CD4-positive, alpha-beta T cell (primary cell): ENCODE measurements at regions of chr6 and their contacts with region 1.

Region 1: GRCh38 chr6:33430991-33431879 is 11.4 kb downstream of the SYNGAP1 start:
- DNase-seq: peak; percentile 74 to 92 (median 85)
- ATAC-seq: peak; percentile 66
- H3K4me3 ChIP-seq: peak overlapping the region; percentile 71
- H3K4me3 Mint-ChIP-seq: peak overlapping the region; percentile 93
- H3K27ac ChIP-seq: peak overlapping the region; percentile 52 to 64
- H3K27ac Mint-ChIP-seq: peak overlapping the region; percentile 92
- H3K4me1 ChIP-seq: peaks cover 63% of the 10 kb centered on the region
- H3K4me1 Mint-ChIP-seq: peaks cover 65% of the 10 kb centered on the region
- H3K27me3 ChIP-seq: no peaks in the 10 kb centered on the region
- H3K27me3 Mint-ChIP-seq: no peaks in the 10 kb centered on the region
- CTCF ChIP-seq: no peak

Region 2: GRCh38 chr6:33417903-33418689 is 13.1 kb before region 1 on chr6 and contains the start of gene CUTA:
- CTCF ChIA-PET with region 1: interaction called, 9 read pairs
- POLR2A ChIA-PET with region 1: interaction called, 60 read pairs
- intact Hi-C with region 1: loop called (anchors 1 to 2 kb)
- DNase-seq: peak; percentile 97 to 100 (median 98)
- ATAC-seq: peak; percentile 85
- H3K4me3 ChIP-seq: peak within 1 kb of the TSS; percentile 82
- H3K4me3 Mint-ChIP-seq: peak within 1 kb of the TSS; percentile 92
- H3K27ac ChIP-seq: peak within 1 kb of the TSS; percentile 97 to 99
- H3K27ac Mint-ChIP-seq: peak within 1 kb of the TSS; percentile 98
- H3K4me1 ChIP-seq: peaks cover 77% of the 10 kb centered on the region
- H3K4me1 Mint-ChIP-seq: peaks cover 79% of the 10 kb centered on the region
- H3K27me3 ChIP-seq: no peaks in the 10 kb centered on the region
- H3K27me3 Mint-ChIP-seq: no peaks in the 10 kb centered on the region
- CTCF ChIP-seq: peak; percentile 30
- total RNA-seq, gene CUTA: 176 to 185 TPM

Region 3: DNA sequence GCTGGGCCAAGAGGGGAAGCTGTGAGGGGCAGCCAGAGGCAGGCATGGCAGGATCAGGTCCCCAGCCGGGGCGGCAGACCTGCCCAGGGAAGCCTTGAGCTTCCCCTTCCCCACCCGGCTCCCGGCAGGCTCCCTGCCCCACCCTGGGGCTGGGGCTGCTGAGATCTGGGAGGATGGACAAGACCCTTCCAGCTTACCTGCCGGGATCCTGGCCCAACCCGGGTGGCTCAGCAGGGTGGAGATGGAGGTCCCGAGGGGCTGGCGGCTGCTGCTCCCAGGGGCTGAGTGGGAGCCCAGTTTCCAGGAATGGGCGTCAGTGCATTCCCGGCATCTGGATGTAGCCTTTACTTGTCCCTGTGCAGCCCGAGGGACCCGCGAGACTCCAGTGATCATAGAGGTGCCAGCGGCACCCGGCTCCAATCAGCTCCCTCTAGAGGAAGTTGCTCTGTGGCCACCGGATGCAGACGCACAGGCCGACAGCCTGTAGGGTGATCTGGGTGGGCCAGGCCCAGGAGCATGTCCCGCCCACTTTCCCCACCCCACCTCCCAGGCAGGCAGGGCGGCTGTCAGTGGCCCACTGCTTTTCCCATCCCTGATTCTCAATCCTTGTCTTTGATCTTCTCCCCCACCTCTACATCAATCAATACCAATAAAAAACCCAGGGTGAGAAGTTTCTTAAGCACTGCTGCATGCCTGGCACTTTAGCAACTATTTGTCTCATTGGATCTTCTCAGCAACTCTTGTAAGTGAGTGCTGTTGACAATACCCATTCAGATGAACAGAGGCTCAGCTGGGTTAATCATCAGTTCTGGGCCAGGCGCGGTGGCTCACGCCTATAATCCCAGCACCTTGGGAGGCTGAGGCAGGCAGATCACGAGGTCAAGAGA is 148.8 kb after region 1 on chr6 and contains the start of gene BAK1:
- CTCF ChIA-PET with region 1: interaction called, 6 read pairs
- POLR2A ChIA-PET with region 1: interaction called, 9 read pairs
- intact Hi-C with region 1: loop called in 1 of 2 experiments (anchors 5 kb)
- DNase-seq: peak; percentile 64 to 92 (median 78)
- ATAC-seq: peak; percentile 93
- H3K4me3 ChIP-seq: peak within 1 kb of the TSS; percentile 99
- H3K4me3 Mint-ChIP-seq: peak within 1 kb of the TSS; percentile 96
- H3K27ac ChIP-seq: peak within 1 kb of the TSS; percentile 82 to 88
- H3K27ac Mint-ChIP-seq: peak within 1 kb of the TSS; percentile 97
- H3K4me1 ChIP-seq: peaks cover 51% of the 10 kb centered on the region
- H3K4me1 Mint-ChIP-seq: peaks cover 44% of the 10 kb centered on the region
- H3K27me3 ChIP-seq: no peaks in the 10 kb centered on the region
- H3K27me3 Mint-ChIP-seq: no peaks in the 10 kb centered on the region
- CTCF ChIP-seq: peak; percentile 63
- total RNA-seq, gene BAK1: 38.3 to 40.8 TPM

Region 4: DNA sequence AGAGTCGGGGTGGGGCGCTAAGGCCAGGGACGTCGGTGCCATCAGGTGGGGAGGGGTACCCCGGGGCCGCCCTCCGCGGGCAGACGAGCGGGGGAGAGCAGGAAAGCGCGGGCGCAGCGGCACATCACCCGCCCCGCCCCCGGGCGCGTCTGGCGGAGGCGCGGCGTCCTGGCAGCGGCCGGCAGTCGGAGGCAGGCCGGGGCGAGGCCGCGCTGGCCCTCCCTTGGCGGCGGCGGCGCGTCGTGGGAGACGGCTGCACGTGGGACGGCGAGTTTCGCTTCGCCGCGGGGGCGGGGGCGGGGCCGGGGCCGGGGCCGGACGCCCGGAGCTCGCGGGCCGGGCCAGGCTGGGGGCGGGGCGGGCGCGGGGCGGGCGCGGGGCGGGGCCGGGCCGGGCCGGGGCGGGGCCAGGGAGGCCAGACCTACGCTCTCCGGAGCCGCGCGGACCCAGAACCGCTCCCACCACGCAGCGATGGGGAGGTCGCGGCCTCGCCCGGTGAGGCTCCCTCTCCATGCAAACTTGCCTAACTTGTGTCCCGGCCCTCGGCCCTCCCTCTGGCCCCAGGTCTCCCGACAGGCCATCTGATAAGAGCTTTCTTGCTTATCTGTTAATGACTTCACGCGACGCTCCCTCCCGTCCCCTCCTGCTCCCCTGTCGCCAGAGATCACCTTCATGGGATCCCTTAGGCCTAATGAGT is 202.4 kb after region 1 on chr6:
- CTCF ChIA-PET with region 1: no interaction called
- POLR2A ChIA-PET with region 1: no interaction called
- intact Hi-C with region 1: no loop called
- DNase-seq: peak in 13 of 14 experiments; percentile 17 to 85 (median 49)
- ATAC-seq: peak; percentile 63
- H3K4me3 ChIP-seq: peak overlapping the region; percentile 55
- H3K4me3 Mint-ChIP-seq: peak overlapping the region; percentile 93
- H3K27ac ChIP-seq: no peak overlapping the region
- H3K27ac Mint-ChIP-seq: peak overlapping the region; percentile 68
- H3K4me1 ChIP-seq: peaks cover 56% of the 10 kb centered on the region
- H3K4me1 Mint-ChIP-seq: peaks cover 71% of the 10 kb centered on the region
- H3K27me3 ChIP-seq: no peaks in the 10 kb centered on the region
- H3K27me3 Mint-ChIP-seq: no peaks in the 10 kb centered on the region
- CTCF ChIP-seq: no peak